ENCODE measurements at regions of chr7 and their contacts with region 1.

Region 1: GRCh38 chr7:80439894-80440821 is 71.7 kb downstream of the GNAT3 start:
- DNase-seq: no peak
- H3K4me3 ChIP-seq: no peak overlapping the region
- H3K27ac ChIP-seq: peak overlapping the region in 4 of 8 donors; percentile 3 to 49 (median 36)
- H3K4me1 ChIP-seq: peaks cover 0 to 27% (median 5%) of the 10 kb centered on the region in 6 donors
- H3K27me3 ChIP-seq: no peaks in the 10 kb centered on the region
- CTCF ChIP-seq: no peak
- POLR2A ChIP-seq: no peak

Region 2: GRCh38 chr7:80679921-80680907 is 240.1 kb after region 1 on chr7:
- intact Hi-C with region 1: loop called (anchors 10 kb)
- DNase-seq: no peak
- H3K4me3 ChIP-seq: no peak overlapping the region
- H3K27ac ChIP-seq: peak overlapping the region in 5 of 8 donors; percentile 8 to 37 (median 26)
- H3K4me1 ChIP-seq: peaks cover 0 to 7% (median 0%) of the 10 kb centered on the region in 6 donors
- H3K27me3 ChIP-seq: no peaks in the 10 kb centered on the region
- CTCF ChIP-seq: no peak
- POLR2A ChIP-seq: no peak